Gastrocnemius medialis (tissue), 4 donors: ENCODE measurements at regions of chr6 and their contacts with region 1.

Region 1: GRCh38 chr6:46491628-46492547 is 639 bp upstream of the RCAN2 start:
- DNase-seq: peak; percentile 26 to 64
- ATAC-seq: peak; percentile 72 to 73
- H3K4me3 ChIP-seq: peak overlapping the region; percentile 73 to 90 (median 78)
- H3K27ac ChIP-seq: peak overlapping the region; percentile 83 to 95 (median 89)
- H3K4me1 ChIP-seq: peaks cover 19 to 35% of the 10 kb centered on the region in 2 donors
- H3K27me3 ChIP-seq: no peaks in the 10 kb centered on the region
- CTCF ChIP-seq: peak; percentile 77 to 93 (median 84)
- POLR2A ChIP-seq: no peak

Region 2: DNA sequence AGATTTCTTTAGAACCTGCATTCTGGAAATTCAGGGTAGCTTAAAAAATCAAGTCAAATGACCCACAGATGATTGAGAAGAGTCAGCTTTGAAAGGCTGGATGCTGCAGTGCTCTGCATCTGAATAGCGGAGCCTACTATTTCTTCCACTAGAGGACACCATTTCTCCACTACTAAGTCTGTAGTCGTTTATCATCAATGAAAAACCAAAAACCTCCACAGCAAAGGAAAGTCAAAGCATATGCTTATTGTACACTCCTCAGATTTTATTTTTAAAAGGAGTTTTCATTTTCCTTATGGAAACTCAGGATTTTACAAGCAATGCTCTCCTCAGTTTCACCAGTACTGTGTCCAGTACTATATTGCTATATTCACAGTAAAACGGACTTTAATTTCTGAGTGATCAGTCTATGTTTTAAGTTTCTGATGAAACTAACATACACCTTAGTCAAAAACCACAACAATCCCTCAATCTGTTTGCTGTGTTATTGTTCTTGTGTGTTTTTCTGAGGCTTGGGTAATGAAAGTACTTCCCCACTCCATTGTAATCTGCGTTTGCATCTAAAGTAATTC is 270.6 kb before region 1 on chr6:
- in situ Hi-C with region 1: no loop called
- intact Hi-C with region 1: loop called (anchors 2 kb)
- DNase-seq: no peak
- ATAC-seq: peak; percentile 50 to 61
- H3K4me3 ChIP-seq: no peak overlapping the region
- H3K27ac ChIP-seq: no peak overlapping the region
- H3K4me1 ChIP-seq: peaks cover 5 to 21% of the 10 kb centered on the region in 2 donors
- H3K27me3 ChIP-seq: no peaks in the 10 kb centered on the region
- CTCF ChIP-seq: peak; percentile 62 to 90 (median 84)
- POLR2A ChIP-seq: no peak

Region 3: DNA sequence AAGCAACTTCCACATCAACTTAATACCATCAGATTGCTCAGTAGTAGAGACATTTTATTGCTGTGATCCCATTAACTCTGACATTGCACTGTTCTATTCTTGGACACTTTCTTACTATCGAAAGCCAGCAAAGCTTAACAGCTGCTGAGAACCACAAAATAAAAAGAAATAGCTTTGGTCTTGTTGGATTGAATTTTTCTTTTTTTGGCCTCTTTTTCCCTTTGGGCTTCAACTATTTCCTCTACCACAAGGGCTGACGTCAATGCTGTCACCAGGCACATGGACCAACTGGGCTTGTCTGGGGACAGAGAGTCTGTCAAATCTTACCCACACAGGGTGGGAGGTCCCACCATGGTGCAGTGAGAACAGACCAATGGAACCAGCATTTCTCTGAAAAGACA is 257.7 kb before region 1 on chr6:
- in situ Hi-C with region 1: loop called in 1 of 4 experiments (anchors 10 kb)
- intact Hi-C with region 1: no loop called
- DNase-seq: peak in 1 of 2 donors; percentile 41
- ATAC-seq: peak; percentile 51 to 53
- H3K4me3 ChIP-seq: no peak overlapping the region
- H3K27ac ChIP-seq: peak overlapping the region; percentile 35 to 69 (median 58)
- H3K4me1 ChIP-seq: peaks cover 23 to 53% of the 10 kb centered on the region in 2 donors
- H3K27me3 ChIP-seq: no peaks in the 10 kb centered on the region
- CTCF ChIP-seq: no peak
- POLR2A ChIP-seq: no peak

Region 4: GRCh38 chr6:46419576-46420002 is 72.3 kb before region 1 on chr6:
- in situ Hi-C with region 1: loop called in 3 of 4 experiments (anchors 5 to 10 kb)
- intact Hi-C with region 1: loop called (anchors 1 kb)
- DNase-seq: peak; percentile 30 to 62
- ATAC-seq: peak; percentile 63 to 68
- H3K4me3 ChIP-seq: no peak overlapping the region
- H3K27ac ChIP-seq: peak overlapping the region in 3 of 4 donors; percentile 9 to 65 (median 54)
- H3K4me1 ChIP-seq: peaks cover 4 to 35% of the 10 kb centered on the region in 2 donors
- H3K27me3 ChIP-seq: no peaks in the 10 kb centered on the region
- CTCF ChIP-seq: peak; percentile 69 to 84 (median 78)
- POLR2A ChIP-seq: no peak

Region 5: GRCh38 chr6:46437671-46438221 is 54.1 kb before region 1 on chr6:
- in situ Hi-C with region 1: no loop called
- intact Hi-C with region 1: loop called (anchors 5 kb)
- DNase-seq: peak; percentile 58 to 72
- ATAC-seq: peak; percentile 91 to 95
- H3K4me3 ChIP-seq: no peak overlapping the region
- H3K27ac ChIP-seq: peak overlapping the region; percentile 81 to 92 (median 87)
- H3K4me1 ChIP-seq: peaks cover 59 to 61% of the 10 kb centered on the region in 2 donors
- H3K27me3 ChIP-seq: no peaks in the 10 kb centered on the region
- CTCF ChIP-seq: no peak
- POLR2A ChIP-seq: peak; percentile 33 to 70

Region 6: DNA sequence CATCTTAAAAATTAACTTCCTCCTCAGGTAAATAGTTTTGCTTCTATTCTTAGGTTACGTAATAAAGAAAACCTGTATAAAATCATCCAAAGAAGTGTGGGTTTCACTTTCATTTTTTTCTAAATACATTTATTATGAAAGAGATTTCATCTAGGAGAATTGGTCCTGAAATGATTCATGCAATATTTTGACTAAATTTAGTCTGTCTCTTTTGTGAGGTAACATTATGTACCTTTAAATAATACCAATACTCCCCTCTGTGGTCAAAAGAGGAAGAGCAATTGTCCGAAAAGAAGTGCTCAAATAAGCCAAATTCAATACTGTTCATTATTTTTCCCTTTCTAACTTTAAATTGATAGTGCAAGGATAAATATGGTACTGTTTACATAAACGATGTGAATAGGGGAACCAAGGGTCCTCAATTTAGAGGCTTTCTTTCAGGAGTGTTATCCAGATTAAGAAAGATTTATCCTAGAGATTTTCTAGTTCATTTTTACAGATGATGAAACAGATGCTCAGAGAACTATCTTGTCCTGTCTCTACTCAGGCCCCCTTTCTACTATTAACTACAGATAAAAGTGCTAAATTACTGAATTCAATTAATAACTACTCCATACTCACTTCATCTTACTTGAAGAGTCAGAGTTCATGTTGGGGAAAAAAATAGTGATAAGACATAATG is 134.5 kb after region 1 on chr6:
- in situ Hi-C with region 1: no loop called
- intact Hi-C with region 1: loop called (anchors 10 kb)
- DNase-seq: no peak
- ATAC-seq: peak; percentile 62 to 73
- H3K4me3 ChIP-seq: no peak overlapping the region
- H3K27ac ChIP-seq: no peak overlapping the region
- H3K4me1 ChIP-seq: peaks cover 6% of the 10 kb centered on the region in 2 donors
- H3K27me3 ChIP-seq: no peaks in the 10 kb centered on the region
- CTCF ChIP-seq: peak; percentile 53 to 75 (median 63)
- POLR2A ChIP-seq: no peak